ENCODE measurements at regions of chr14 and their contacts with region 1.

Region 1: DNA sequence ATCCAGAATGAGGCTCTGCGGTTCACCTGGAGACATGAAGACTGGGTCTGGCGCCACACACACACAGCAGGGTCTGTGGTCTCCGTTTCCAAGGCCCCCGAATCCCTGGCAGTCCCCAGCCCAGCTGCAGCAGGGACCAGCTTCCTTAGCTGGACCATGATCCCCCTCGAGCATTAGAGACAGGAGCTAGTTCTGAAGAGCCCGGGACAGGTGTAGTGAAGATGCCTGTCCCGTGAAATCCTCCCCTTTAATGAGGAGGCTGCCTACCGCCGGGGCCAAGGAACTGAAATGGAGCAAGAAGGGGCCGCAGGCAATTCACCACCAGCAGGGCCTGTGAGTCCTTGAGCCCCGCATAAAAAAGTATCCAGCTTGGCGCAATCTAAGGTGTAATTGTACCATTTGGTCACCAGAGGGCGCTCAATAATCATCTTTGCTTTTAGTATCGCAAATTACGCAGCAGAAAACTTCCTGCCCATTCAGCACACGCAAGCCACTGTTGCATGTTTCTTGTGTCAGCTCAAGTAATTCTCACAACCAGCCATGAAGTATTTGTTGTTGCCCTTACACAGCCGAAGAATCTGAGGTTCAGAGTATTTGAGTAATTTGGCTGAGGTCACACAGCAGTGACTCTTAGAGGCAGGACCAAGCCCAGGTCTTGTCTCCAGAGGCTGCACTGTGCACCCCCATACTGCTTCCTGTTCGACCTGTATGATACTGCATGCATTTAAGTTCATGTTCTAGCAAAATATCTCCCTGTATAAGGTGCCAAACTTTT is 54.3 kb upstream of the PPP2R5C start:
- DNase-seq: peak; percentile 74 to 87
- H3K4me3 ChIP-seq: no peak overlapping the region
- H3K27ac ChIP-seq: peak overlapping the region; percentile 48; the same call in 1 of the 2 replicates
- H3K4me1 ChIP-seq: peaks cover 34% of the 10 kb centered on the region
- H3K27me3 ChIP-seq: no peaks in the 10 kb centered on the region
- CTCF ChIP-seq: peak; percentile 100

Region 2: DNA sequence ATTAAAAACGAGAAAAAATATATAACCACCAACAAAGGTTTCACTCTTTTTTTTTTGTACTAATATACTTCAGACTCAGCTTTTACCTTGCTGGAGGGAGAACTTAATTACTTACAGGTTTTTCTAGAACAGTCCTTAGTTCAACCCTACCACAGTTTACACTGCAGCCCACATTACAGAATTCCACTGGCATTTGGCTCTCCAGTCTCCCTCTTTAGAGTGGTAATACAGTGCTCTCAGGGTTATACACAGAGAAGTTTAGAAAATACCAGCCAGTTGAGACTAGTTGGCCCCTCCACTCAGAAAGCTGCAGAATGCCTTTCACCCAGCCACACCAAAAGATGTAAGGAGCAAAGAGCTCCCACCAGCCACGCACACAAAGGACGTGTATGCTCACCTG is 268.2 kb before region 1 on chr14:
- CTCF ChIA-PET with region 1: interaction called, 12 read pairs
- POLR2A ChIA-PET with region 1: no interaction called
- intact Hi-C with region 1: no loop called
- DNase-seq: no peak
- H3K4me3 ChIP-seq: no peak overlapping the region
- H3K27ac ChIP-seq: no peak overlapping the region
- H3K4me1 ChIP-seq: peaks cover 7% of the 10 kb centered on the region
- H3K27me3 ChIP-seq: no peaks in the 10 kb centered on the region
- CTCF ChIP-seq: no peak

Region 3: DNA sequence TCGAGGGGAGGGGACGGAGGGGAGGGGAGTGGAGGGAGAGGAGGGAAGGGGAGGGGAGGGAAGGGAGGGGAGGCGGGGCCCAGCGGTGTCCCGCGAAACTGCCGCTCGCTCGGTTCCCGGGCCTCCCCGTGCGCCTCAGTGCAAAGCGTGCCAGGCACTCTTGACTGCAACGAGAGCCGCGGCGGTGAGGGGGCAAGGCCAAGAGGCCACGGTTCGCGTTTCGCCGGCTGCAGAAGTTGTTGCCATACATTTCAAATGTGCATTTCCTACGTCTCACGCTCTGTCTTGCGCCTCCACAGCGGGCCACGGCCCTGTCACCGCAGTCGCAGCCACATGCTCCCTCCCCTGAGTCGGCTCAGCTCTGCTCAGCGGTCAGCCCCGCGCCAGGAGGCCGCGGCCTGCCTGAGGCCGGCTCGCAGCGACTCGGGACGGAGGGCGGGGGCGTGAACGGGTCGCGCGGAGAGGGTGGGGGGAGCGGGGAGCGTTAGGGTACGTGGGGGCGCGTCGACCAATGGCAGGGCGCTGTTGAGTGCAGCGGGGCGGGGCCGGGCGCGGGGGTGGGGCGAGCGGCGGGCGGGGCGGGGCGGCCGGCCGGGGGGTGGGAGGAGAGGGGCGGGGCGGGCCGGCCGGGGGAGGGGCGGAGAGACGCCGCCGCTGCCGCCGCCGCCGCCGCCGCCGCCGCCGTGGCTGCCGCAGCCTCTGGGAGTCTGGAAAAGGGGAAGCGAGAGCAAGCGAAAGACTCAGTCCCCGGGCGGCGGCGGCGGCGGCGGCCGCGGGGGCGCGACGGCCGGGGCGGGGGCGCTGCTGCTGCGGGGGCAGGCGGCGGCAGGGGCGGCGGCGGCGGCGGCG is 54.0 kb after region 1 on chr14 and contains the start of gene PPP2R5C:
- CTCF ChIA-PET with region 1: interaction called, 15 read pairs
- POLR2A ChIA-PET with region 1: interaction called, 11 read pairs
- intact Hi-C with region 1: loop called (anchors 1 kb)
- DNase-seq: peak; percentile 84 to 96
- H3K4me3 ChIP-seq: peak within 1 kb of the TSS; percentile 99
- H3K27ac ChIP-seq: peak within 1 kb of the TSS; percentile 83
- H3K4me1 ChIP-seq: peaks cover 23% of the 10 kb centered on the region
- H3K27me3 ChIP-seq: no peaks in the 10 kb centered on the region
- CTCF ChIP-seq: no peak
- total RNA-seq, gene PPP2R5C: 301 and 401 TPM in 2 replicates

Region 4: GRCh38 chr14:101889898-101890297 is 182.6 kb after region 1 on chr14:
- CTCF ChIA-PET with region 1: no interaction called
- POLR2A ChIA-PET with region 1: no interaction called
- intact Hi-C with region 1: loop called (anchors 1 kb)
- DNase-seq: peak in 1 of 2 experiments; percentile 46
- H3K4me3 ChIP-seq: no peak overlapping the region
- H3K27ac ChIP-seq: no peak overlapping the region
- H3K4me1 ChIP-seq: no peaks in the 10 kb centered on the region
- H3K27me3 ChIP-seq: no peaks in the 10 kb centered on the region
- CTCF ChIP-seq: peak; percentile 31; the same call in 1 of the 2 replicates

Region 5: GRCh38 chr14:101917413-101918017 is 210.3 kb after region 1 on chr14:
- CTCF ChIA-PET with region 1: no interaction called
- POLR2A ChIA-PET with region 1: no interaction called
- intact Hi-C with region 1: no loop called
- DNase-seq: no peak
- H3K4me3 ChIP-seq: no peak overlapping the region
- H3K27ac ChIP-seq: no peak overlapping the region
- H3K4me1 ChIP-seq: no peaks in the 10 kb centered on the region
- H3K27me3 ChIP-seq: no peaks in the 10 kb centered on the region
- CTCF ChIP-seq: no peak

Region 6: DNA sequence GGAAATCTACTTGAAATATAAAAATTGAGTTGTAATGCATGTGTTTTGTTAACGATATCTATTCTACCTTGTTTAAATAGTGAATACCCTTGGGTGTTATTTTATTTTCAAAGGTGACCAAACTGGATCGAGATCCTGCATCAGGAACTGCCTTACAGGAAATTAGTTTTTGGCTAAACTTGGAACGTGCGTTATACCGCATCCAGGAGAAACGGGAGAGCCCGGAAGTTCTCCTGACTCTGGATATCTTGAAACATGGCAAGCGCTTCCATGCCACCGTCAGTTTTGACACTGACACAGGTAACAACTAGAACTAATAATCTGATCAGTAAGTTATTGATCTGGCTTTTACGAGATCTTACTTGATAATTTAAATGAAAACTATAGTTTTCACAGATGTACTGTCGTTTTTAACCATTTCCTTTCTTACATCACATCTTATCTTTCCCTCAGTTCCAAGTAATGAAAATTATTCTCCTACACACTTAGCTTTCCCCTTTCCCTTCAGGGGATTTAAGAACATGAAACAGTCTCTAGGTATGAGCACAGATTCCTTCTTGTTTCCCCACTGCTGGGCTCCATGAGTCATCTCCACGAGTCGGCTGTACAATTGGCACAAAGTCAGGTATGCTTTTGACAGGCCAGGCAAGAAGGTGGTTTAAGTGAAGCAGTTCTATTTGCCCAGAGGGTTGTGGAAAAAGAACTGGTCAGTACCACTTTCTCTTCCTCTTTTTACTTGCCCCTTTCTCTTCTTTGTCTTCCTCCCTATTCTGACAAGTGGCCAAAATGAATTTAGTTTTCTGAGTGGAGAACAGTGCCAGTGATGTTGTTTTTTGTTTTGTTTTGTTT is 273.2 kb after region 1 on chr14:
- CTCF ChIA-PET with region 1: no interaction called
- POLR2A ChIA-PET with region 1: no interaction called
- intact Hi-C with region 1: loop called (anchors 1 kb)
- DNase-seq: peak; percentile 95 to 100
- H3K4me3 ChIP-seq: peak overlapping the region; percentile 5; the same call in 1 of the 2 replicates
- H3K27ac ChIP-seq: peak overlapping the region; percentile 88
- H3K4me1 ChIP-seq: peaks cover 54% of the 10 kb centered on the region
- H3K27me3 ChIP-seq: no peaks in the 10 kb centered on the region
- CTCF ChIP-seq: no peak

Region 7: DNA sequence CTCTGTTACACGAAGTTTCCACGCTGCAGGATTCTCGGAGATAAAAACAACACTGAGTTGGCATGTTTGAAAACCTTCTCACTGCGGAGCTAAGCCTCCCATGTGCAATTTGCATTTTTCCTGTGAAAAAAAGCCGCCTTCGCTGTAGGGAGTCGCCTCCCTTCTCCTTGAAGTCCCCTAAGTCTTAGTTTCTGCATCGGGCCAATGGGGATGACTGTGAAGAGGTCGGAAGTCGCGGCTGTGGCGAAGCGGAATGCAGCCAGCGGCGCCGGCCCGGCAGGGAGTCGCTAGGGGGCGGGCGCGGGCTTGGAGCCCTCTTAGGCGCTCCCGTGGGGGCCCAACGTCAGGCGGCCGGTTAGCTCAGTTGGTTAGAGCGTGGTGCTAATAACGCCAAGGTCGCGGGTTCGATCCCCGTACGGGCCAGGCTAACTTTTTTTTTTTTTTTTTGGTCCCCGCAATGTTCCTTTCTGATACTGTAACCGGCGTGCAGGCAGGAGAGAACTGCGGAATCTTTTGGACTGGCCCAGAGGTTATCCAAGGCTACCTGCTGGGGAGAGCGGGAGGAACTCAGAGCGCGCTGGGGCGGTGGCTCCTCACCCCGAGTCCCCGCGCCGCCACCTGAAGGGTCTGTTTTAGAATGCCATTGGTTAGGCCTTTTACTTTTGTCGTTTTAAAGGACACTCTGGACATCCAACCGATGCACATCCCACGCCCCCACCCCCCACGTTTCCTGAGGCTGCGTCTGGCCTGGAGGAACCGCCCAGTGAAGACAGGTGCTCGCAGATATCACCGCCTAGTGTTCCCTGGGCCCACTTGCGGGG is 609.7 kb after region 1 on chr14:
- CTCF ChIA-PET with region 1: no interaction called
- POLR2A ChIA-PET with region 1: no interaction called
- intact Hi-C with region 1: loop called (anchors 10 kb)
- DNase-seq: peak; percentile 85 to 91
- H3K4me3 ChIP-seq: peak overlapping the region; percentile 69
- H3K27ac ChIP-seq: peak overlapping the region; percentile 69
- H3K4me1 ChIP-seq: peaks cover 42% of the 10 kb centered on the region
- H3K27me3 ChIP-seq: no peaks in the 10 kb centered on the region
- CTCF ChIP-seq: peak; percentile 43